ENCODE measurements at regions of chr17 and their contacts with region 1.

Region 1: GRCh38 chr17:75319904-75320691 is 30.9 kb upstream of the SLC25A19 start:
- DNase-seq: no peak
- H3K27ac ChIP-seq: no peak overlapping the region
- CTCF ChIP-seq: no peak

Region 2: GRCh38 chr17:75227729-75228128 is 92.4 kb before region 1 on chr17:
- CTCF ChIA-PET with region 1: no interaction called
- POLR2A ChIA-PET with region 1: no interaction called
- DNase-seq: no peak
- H3K27ac ChIP-seq: no peak overlapping the region
- CTCF ChIP-seq: no peak

Region 3: GRCh38 chr17:75295201-75296158 is 24.6 kb before region 1 on chr17:
- CTCF ChIA-PET with region 1: no interaction called
- POLR2A ChIA-PET with region 1: no interaction called
- DNase-seq: no peak
- H3K27ac ChIP-seq: no peak overlapping the region
- CTCF ChIP-seq: no peak

Region 4: DNA sequence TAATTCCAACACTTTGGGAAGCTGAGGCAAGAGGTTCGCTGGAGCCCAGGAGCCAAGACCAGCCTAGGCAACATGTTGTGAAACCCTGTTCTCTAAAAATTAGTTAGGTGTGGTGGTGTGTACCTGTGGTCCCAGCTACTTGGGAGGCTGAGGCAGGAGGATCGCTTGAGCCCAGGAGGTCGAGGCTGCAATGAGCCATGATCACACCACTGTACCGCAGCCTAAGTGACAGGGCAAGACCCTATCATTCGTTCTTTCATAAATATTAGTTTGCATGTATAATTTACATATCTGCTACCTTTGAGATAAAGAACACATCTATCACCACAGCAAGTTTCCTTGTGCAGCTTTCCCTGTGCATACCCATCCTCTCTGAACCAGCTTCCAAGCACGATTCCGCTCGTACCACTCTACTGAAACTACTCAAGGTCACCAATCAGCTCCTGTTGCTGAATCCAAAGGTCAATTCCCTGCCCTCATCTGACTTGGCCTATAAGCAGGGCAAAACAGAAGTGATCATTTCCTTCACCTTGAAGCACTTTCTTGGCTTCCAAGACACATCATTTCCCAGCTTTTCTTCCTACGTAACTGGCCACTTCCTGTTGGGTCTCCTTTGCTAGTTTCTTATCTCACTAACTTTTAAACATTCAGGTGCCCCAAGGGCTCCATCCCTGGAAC is 36.3 kb after region 1 on chr17:
- CTCF ChIA-PET with region 1: no interaction called
- POLR2A ChIA-PET with region 1: no interaction called
- DNase-seq: no peak
- H3K27ac ChIP-seq: no peak overlapping the region
- CTCF ChIP-seq: no peak

Region 5: DNA sequence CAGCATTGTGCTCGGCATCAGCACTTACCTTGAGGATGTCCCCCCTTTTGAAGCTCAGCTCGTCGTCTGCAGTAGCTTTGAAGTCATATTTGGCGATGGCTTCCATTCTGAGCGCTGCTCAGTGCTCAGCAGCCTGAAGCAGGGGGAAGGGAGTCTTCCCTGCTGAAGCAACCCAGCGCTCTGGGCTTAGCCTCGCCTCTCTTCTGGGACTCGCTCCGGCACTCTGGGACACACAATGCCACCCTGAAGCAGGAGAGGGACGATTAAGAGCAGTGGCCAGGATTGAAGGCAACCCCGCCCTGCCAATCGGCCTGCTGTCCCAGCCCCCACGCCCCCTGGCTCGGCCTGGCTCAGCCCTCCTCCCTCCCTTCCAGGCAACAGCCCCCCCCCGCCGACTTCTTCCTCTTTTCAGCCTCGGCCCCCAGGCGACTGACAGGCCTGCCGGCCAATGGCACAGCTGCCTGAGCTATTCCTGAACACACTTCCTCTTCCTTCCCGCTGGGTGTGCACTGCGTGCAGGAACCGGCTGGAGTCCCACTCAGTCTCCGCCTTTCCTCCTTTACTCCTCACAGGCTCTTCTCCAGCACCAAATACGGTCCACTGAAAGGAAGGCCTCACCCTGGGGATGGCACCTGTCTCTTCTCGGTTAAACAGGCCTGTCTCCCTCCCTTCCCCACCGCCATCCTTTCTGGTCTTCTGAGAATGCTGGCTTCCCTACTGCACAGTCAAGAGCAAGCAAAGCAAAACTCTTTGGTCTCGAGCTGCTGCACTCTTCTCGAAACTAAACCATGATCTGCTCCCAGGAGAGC is 73.6 kb after region 1 on chr17:
- CTCF ChIA-PET with region 1: interaction called, 11 read pairs
- POLR2A ChIA-PET with region 1: no interaction called
- DNase-seq: peak; percentile 99
- H3K27ac ChIP-seq: peak overlapping the region; percentile 85
- CTCF ChIP-seq: no peak

Region 6: DNA sequence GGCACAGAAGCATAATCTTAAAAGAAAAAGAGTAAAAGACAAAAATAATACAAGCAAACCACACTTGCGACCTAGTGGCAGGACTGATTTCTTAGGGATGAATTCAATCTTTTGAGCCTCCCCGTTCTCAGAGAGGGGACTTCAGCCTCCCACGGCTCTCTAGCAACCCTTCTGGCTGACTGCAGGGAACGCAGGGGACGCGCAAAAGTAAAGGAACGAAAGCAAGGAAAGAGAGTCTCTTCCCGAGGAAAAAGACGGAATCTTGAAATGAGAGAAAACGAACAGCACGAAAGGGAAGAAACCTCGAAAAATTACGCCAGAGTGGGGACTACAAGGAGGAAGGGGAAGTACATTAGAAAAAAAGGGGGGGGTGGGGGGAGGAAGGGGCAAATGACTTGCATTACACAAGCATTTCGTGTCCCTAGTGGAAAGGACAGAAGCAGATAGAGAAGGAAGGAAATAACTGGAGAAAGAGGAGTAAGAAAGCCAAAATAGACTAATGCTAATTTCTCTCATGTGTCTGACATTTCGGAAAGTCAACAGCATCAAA is 84.2 kb after region 1 on chr17:
- CTCF ChIA-PET with region 1: interaction called, 14 read pairs
- POLR2A ChIA-PET with region 1: no interaction called
- DNase-seq: peak; percentile 74
- H3K27ac ChIP-seq: peak overlapping the region; percentile 85
- CTCF ChIP-seq: peak; percentile 97

Measured in RWPE1 (cell line).